T-cell (primary cell): ENCODE measurements at regions of chr6 and their contacts with region 1.

Region 1: GRCh38 chr6:42628604-42629003 is 64.8 kb downstream of the UBR2 start:
- DNase-seq: no peak
- ATAC-seq: no peak
- H3K4me3 ChIP-seq: no peak overlapping the region
- H3K4me3 Mint-ChIP-seq: no peak overlapping the region
- H3K27ac ChIP-seq: no peak overlapping the region
- H3K27ac Mint-ChIP-seq: no peak overlapping the region
- H3K4me1 ChIP-seq: no peaks in the 10 kb centered on the region
- H3K4me1 Mint-ChIP-seq: peaks cover 7 to 19% (median 19%) of the 10 kb centered on the region in 3 donors
- H3K27me3 ChIP-seq: no peaks in the 10 kb centered on the region
- H3K27me3 Mint-ChIP-seq: no peaks in the 10 kb centered on the region

Region 2: DNA sequence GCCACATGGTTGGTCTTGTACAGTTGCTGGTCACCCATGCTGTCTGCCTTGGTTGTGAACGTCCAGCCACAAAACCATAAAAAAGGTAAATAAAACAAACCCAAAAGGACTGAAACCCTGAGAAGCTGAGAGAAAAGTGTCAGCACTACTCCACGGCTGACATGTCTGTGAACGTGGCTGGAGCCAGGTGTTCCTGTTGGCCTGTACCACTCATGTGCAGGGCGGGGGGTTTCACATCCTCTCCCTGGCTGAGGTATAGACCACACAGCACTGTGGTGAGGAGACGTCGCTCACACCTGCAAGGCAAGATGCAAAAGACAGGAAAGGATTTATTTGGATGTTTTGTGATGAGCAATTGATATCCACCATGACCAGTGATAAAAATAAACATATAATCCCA is 359.1 kb before region 1 on chr6:
- CTCF ChIA-PET with region 1: no interaction called
- POLR2A ChIA-PET with region 1: no interaction called
- DNase-seq: peak in 21 of 35 experiments; percentile 4 to 54 (median 26)
- ATAC-seq: peak; percentile 37 to 77 (median 57)
- H3K4me3 ChIP-seq: no peak overlapping the region
- H3K4me3 Mint-ChIP-seq: no peak overlapping the region
- H3K27ac ChIP-seq: no peak overlapping the region
- H3K27ac Mint-ChIP-seq: peak overlapping the region; percentile 41 to 53
- H3K4me1 ChIP-seq: peaks cover 0 to 10% of the 10 kb centered on the region in 2 experiments
- H3K4me1 Mint-ChIP-seq: peaks cover 6 to 14% (median 13%) of the 10 kb centered on the region in 3 donors
- H3K27me3 ChIP-seq: no peaks in the 10 kb centered on the region
- H3K27me3 Mint-ChIP-seq: no peaks in the 10 kb centered on the region

Region 3: GRCh38 chr6:42756722-42757121 is 128.1 kb after region 1 on chr6:
- CTCF ChIA-PET with region 1: no interaction called
- POLR2A ChIA-PET with region 1: interaction called in 1 of 2 experiments, 10 read pairs
- DNase-seq: no peak
- ATAC-seq: no peak
- H3K4me3 ChIP-seq: no peak overlapping the region
- H3K4me3 Mint-ChIP-seq: no peak overlapping the region
- H3K27ac ChIP-seq: no peak overlapping the region
- H3K27ac Mint-ChIP-seq: no peak overlapping the region
- H3K4me1 ChIP-seq: no peaks in the 10 kb centered on the region
- H3K4me1 Mint-ChIP-seq: peaks cover 29 to 38% (median 37%) of the 10 kb centered on the region in 3 donors
- H3K27me3 ChIP-seq: no peaks in the 10 kb centered on the region
- H3K27me3 Mint-ChIP-seq: no peaks in the 10 kb centered on the region